ENCODE measurements at regions of chr9 and their contacts with region 1.

Region 1: GRCh38 chr9:31119882-31120454 is 1264.5 kb upstream of the ACO1 start:
- DNase-seq: peak in 8 of 9 donors; percentile 7 to 70 (median 60)
- ATAC-seq: peak; percentile 76
- H3K4me3 ChIP-seq: no peak overlapping the region
- H3K4me3 Mint-ChIP-seq: no peak overlapping the region
- H3K27ac ChIP-seq: no peak overlapping the region
- H3K27ac Mint-ChIP-seq: peak overlapping the region in 3 of 9 donors; percentile 9 to 34 (median 23)
- H3K4me1 ChIP-seq: no peaks in the 10 kb centered on the region
- H3K4me1 Mint-ChIP-seq: peaks cover 0 to 8% (median 6%) of the 10 kb centered on the region in 7 donors
- H3K27me3 ChIP-seq: no peaks in the 10 kb centered on the region
- H3K27me3 Mint-ChIP-seq: peaks cover 0 to 6% (median 0%) of the 10 kb centered on the region in 5 donors

Region 2: DNA sequence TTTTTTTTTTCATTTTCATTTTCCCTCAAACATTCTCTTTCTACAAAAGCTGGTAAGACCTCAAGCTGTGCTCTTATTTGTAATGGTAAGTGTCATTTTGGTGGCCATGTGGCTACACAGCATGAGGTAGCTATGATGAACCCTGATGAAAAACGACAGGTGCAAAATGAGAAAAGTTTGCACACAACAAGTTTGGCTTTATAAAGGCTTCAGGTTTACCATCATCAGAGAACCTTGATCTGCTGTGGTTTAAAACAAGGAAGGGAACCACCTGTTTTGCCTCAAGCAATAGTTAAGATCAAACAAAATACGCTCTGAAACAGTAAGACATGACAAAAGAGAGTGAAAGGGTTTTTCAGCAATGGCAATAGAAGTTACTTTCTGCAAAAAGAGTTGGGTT is 139.9 kb after region 1 on chr9:
- CTCF ChIA-PET with region 1: no interaction called
- POLR2A ChIA-PET with region 1: no interaction called
- intact Hi-C with region 1: loop called in 1 of 2 experiments (anchors 1 kb)
- DNase-seq: peak in 7 of 9 donors; percentile 56 to 85 (median 80)
- ATAC-seq: peak; percentile 97
- H3K4me3 ChIP-seq: no peak overlapping the region
- H3K4me3 Mint-ChIP-seq: peak overlapping the region; percentile 15 to 72 (median 54)
- H3K27ac ChIP-seq: peak overlapping the region; percentile 19
- H3K27ac Mint-ChIP-seq: peak overlapping the region; percentile 3 to 96 (median 87)
- H3K4me1 ChIP-seq: peaks cover 0 to 16% of the 10 kb centered on the region in 2 donors
- H3K4me1 Mint-ChIP-seq: peaks cover 3 to 33% (median 20%) of the 10 kb centered on the region in 7 donors
- H3K27me3 ChIP-seq: no peaks in the 10 kb centered on the region
- H3K27me3 Mint-ChIP-seq: no peaks in the 10 kb centered on the region

Region 3: GRCh38 chr9:31323726-31324444 is 203.9 kb after region 1 on chr9:
- CTCF ChIA-PET with region 1: no interaction called
- POLR2A ChIA-PET with region 1: no interaction called
- intact Hi-C with region 1: loop called in 1 of 2 experiments (anchors 1 kb)
- DNase-seq: peak in 6 of 9 donors; percentile 35 to 69 (median 55)
- ATAC-seq: peak; percentile 73
- H3K4me3 ChIP-seq: peak overlapping the region; percentile 7
- H3K4me3 Mint-ChIP-seq: peak overlapping the region in 9 of 10 donors; percentile 18 to 72 (median 57)
- H3K27ac ChIP-seq: peak overlapping the region; percentile 49
- H3K27ac Mint-ChIP-seq: peak overlapping the region; percentile 30 to 95 (median 78)
- H3K4me1 ChIP-seq: peaks cover 18 to 32% of the 10 kb centered on the region in 2 donors
- H3K4me1 Mint-ChIP-seq: peaks cover 10 to 53% (median 47%) of the 10 kb centered on the region in 7 donors
- H3K27me3 ChIP-seq: no peaks in the 10 kb centered on the region
- H3K27me3 Mint-ChIP-seq: no peaks in the 10 kb centered on the region

Region 4: DNA sequence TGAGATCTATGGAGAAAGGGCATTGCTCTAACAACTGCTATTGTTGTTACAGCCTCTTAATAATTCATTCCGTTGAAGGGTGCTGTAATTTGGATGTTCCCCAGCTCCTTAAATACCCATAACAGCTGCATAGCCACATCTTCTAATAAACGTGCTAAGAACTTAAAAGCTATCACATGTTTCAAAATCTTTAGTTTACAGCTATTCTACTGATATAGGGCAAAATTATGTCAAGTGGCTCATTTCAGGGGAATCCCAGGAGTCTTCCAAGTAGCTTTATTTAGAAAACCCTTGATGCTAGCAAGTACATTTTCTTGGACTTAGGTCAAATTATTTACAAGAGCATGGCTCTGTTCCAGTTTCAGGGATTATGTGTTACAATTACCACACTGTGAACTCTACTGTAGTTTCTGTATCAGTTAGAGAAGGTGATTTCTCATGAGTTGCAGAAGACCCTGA is 274.1 kb after region 1 on chr9:
- CTCF ChIA-PET with region 1: no interaction called
- POLR2A ChIA-PET with region 1: no interaction called
- intact Hi-C with region 1: loop called in 1 of 2 experiments (anchors 10 kb)
- DNase-seq: no peak
- ATAC-seq: no peak
- H3K4me3 ChIP-seq: no peak overlapping the region
- H3K4me3 Mint-ChIP-seq: no peak overlapping the region
- H3K27ac ChIP-seq: no peak overlapping the region
- H3K27ac Mint-ChIP-seq: no peak overlapping the region
- H3K4me1 ChIP-seq: peaks cover 0 to 7% of the 10 kb centered on the region in 2 donors
- H3K4me1 Mint-ChIP-seq: peaks cover 4 to 39% (median 26%) of the 10 kb centered on the region in 7 donors
- H3K27me3 ChIP-seq: no peaks in the 10 kb centered on the region
- H3K27me3 Mint-ChIP-seq: no peaks in the 10 kb centered on the region

Region 5: DNA sequence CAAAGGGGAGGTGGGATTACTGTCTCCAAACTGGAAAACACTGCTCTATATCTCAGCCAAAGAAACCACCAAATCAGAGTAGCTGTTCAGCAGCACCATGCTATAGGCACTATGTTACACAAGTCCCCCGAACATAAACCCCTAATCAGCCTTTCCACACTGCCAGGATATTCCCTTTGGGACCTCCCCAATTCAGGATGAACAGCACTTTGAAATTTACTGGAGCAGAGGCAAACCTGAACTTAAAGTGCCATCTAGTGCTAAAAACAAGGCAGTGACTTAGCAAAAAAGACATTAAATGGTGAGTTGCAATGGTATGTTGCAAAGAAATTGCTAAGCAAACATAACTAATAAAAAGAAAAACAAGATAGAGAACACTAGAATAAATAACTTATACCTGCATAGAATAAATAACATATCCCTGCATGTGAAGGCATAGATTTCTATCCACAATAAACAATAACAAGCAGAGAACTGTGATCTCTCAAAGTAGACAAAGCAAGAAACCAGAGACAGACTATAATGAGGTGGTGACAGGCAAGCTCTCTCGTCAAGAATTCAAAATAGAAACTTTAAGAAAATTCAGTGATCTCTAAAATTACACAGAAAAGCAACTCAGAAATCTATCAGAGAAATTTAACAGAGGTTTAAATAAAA is 680.1 kb after region 1 on chr9:
- CTCF ChIA-PET with region 1: interaction called, 10 read pairs
- POLR2A ChIA-PET with region 1: no interaction called
- intact Hi-C with region 1: loop called (anchors 1 kb)
- DNase-seq: peak in 5 of 9 donors; percentile 6 to 26 (median 11)
- ATAC-seq: no peak
- H3K4me3 ChIP-seq: no peak overlapping the region
- H3K4me3 Mint-ChIP-seq: no peak overlapping the region
- H3K27ac ChIP-seq: no peak overlapping the region
- H3K27ac Mint-ChIP-seq: peak overlapping the region in 2 of 9 donors; percentile 11 to 27
- H3K4me1 ChIP-seq: no peaks in the 10 kb centered on the region
- H3K4me1 Mint-ChIP-seq: peaks cover 0 to 19% (median 0%) of the 10 kb centered on the region in 7 donors
- H3K27me3 ChIP-seq: no peaks in the 10 kb centered on the region
- H3K27me3 Mint-ChIP-seq: no peaks in the 10 kb centered on the region

Region 6: DNA sequence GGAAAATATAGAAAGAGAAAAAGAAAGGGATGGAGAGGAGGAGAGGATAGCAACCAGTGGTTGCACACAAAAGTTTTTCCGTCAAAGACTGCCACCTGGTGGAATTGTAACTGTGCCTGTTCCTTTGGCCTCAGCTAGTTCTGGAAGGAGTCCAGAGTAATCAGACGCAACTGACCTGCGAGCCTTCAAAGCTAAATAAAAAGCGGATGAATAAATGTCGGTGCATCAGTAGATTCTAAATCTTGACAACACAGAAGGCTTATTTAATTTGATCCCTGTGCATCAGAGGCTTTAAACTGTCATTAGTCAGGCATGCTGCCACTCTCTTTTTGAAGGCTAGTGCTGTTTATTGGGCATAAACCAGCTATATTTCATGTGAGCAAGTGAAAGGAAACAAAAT is 1131.6 kb after region 1 on chr9:
- CTCF ChIA-PET with region 1: no interaction called
- POLR2A ChIA-PET with region 1: no interaction called
- intact Hi-C with region 1: loop called in 1 of 2 experiments (anchors 1 kb)
- DNase-seq: peak in 5 of 9 donors; percentile 13 to 34 (median 24)
- ATAC-seq: no peak
- H3K4me3 ChIP-seq: no peak overlapping the region
- H3K4me3 Mint-ChIP-seq: no peak overlapping the region
- H3K27ac ChIP-seq: no peak overlapping the region
- H3K27ac Mint-ChIP-seq: no peak overlapping the region
- H3K4me1 ChIP-seq: no peaks in the 10 kb centered on the region
- H3K4me1 Mint-ChIP-seq: no peaks in the 10 kb centered on the region
- H3K27me3 ChIP-seq: no peaks in the 10 kb centered on the region
- H3K27me3 Mint-ChIP-seq: peaks cover 2 to 19% (median 9%) of the 10 kb centered on the region in 5 donors

Region 7: DNA sequence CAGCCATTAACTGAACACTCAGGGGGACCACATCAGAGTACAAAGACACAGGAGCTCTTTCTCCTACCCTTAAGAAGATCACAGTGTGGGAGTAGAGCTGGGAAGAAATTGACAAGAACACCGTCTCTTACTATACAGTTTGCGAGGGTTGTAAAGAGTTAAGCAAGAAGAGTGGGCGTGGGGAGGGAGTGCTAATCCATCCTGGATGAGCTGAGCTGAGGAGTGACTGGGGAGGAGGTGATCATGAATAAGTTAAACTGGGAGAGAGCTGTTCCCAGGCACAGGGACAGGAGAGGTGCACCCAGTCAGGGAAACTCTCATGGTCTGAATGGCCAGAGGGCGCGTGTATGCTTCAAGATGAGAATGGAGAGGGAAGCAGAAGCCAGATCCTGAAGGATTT is 1498.3 kb after region 1 on chr9:
- CTCF ChIA-PET with region 1: no interaction called
- POLR2A ChIA-PET with region 1: no interaction called
- intact Hi-C with region 1: no loop called
- DNase-seq: no peak
- ATAC-seq: no peak
- H3K4me3 ChIP-seq: no peak overlapping the region
- H3K4me3 Mint-ChIP-seq: no peak overlapping the region
- H3K27ac ChIP-seq: no peak overlapping the region
- H3K27ac Mint-ChIP-seq: no peak overlapping the region
- H3K4me1 ChIP-seq: no peaks in the 10 kb centered on the region
- H3K4me1 Mint-ChIP-seq: no peaks in the 10 kb centered on the region
- H3K27me3 ChIP-seq: no peaks in the 10 kb centered on the region
- H3K27me3 Mint-ChIP-seq: peaks cover 9 to 59% (median 38%) of the 10 kb centered on the region in 5 donors